ENCODE measurements at regions of chr11 and their contacts with region 1.

Region 1: DNA sequence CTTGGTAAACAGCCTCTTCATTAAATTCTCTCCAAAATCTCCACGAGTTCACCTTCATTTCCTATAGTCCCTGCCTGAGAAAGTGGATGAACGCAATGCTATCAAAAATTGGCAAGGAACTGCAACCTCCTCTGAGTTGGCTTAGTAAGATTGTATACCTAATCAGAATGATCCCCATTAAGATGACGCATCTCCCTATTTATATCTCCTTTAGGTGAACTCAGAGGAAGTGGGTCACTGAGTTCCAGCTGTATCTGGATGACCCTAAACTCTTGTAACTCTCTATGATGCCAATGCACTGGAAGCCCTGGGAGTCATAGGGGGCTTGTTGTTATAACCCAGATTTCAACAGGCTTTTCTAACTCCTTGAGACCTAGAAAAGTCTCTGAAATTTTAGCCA is 48.2 kb downstream of the OR10A6 start:
- DNase-seq: no peak
- ATAC-seq: no peak
- H3K4me3 ChIP-seq: no peak overlapping the region
- H3K27ac ChIP-seq: no peak overlapping the region
- H3K4me1 ChIP-seq: no peaks in the 10 kb centered on the region
- H3K27me3 ChIP-seq: no peaks in the 10 kb centered on the region
- CTCF ChIP-seq: no peak
- EP300 ChIP-seq: no peak
- POLR2A ChIP-seq: no peak
- RAD21 ChIP-seq: no peak

Region 2: DNA sequence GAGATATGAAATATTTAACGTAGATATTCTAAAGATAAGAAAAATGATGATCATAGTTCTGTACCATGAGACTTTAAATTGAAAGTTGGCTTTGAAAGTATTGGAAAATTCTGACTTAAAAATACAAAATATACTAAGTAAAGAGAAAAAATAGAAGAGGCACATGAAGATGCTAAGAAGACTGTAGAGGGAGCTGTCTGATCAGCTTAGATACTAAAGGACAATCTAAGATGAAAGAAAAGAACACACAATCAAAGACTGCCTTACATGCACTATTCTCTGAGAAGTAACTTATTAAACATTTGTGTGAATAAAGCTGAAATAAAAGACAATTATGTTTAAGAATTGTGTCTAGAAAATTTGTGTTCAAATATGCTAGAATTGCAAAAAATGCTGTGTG is 739.0 kb before region 1 on chr11:
- CTCF ChIA-PET with region 1: no interaction called
- POLR2A ChIA-PET with region 1: no interaction called
- in situ Hi-C with region 1: no loop called
- intact Hi-C with region 1: loop called (anchors 5 kb)
- DNase-seq: no peak
- ATAC-seq: no peak
- H3K4me3 ChIP-seq: no peak overlapping the region
- H3K27ac ChIP-seq: no peak overlapping the region
- H3K4me1 ChIP-seq: no peaks in the 10 kb centered on the region
- H3K27me3 ChIP-seq: peaks cover 0 to 3% of the 10 kb centered on the region in 2 experiments; a peak in 1 of 5 replicates
- CTCF ChIP-seq: no peak
- EP300 ChIP-seq: no peak
- POLR2A ChIP-seq: no peak
- RAD21 ChIP-seq: no peak

Region 3: DNA sequence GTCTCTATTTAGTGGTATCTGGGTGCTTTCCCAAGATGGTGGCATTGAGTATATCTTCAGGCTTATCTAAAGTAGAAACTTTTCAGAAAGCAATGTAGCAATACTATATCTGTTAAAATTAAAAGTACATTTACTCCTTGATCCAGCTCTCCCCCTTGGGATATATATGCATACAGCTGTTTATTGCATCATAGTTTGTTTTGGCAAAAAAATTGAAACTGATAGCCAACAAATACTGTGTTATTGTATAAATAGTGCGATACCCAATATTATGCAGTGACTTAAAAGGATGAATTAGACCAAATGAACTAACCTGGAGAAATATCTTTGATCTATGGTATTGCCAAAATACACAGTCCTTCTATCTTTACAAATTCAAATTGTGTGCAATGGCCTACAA is 67.1 kb after region 1 on chr11:
- CTCF ChIA-PET with region 1: no interaction called
- POLR2A ChIA-PET with region 1: no interaction called
- in situ Hi-C with region 1: no loop called
- intact Hi-C with region 1: no loop called
- DNase-seq: no peak
- ATAC-seq: no peak
- H3K4me3 ChIP-seq: no peak overlapping the region
- H3K27ac ChIP-seq: no peak overlapping the region
- H3K4me1 ChIP-seq: no peaks in the 10 kb centered on the region
- H3K27me3 ChIP-seq: no peaks in the 10 kb centered on the region
- CTCF ChIP-seq: no peak
- EP300 ChIP-seq: no peak
- POLR2A ChIP-seq: no peak
- RAD21 ChIP-seq: no peak

Region 4: DNA sequence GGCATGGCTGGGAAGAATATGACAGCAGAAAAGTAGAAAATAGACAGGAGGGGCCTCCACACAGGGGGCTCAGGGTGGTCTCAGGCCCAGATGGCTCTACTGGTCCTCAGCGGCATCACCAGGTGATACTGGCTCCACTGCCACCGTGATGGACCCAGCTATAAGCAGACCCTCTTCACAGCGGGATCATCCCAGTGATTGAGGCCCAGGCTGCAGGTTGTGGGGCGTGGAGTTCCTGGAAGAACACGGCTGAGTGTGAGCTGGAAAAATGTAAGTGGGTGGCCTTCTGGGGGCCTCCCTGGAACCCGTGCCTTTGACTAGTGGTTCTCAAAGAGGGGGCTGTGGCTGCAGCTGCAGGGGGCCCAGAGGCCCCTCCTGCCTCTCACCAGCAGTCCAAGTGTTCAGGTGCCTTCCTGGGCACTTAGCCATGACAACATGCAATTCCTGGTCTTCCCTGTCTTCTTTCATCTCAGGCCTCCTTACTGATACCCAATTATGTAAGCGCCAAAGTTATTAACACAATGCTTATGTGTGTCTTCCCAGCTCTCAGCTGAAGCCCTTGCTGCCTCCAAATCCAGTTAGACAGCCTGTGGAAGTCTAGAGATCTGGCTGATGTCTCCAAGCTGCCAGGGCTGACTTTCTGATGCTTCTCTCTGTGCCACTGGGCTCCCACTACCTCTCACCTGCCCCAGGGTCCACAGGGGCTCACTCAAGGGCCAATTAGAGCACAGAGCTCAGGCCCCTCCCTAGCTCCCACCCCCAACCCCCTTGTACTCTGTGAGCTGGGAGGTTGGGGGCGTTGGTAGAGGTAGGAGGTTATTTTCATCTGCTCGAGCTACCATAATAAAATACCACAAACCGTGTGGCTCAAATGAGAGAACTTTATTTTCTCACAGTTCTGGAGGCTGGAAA is 490.9 kb after region 1 on chr11:
- CTCF ChIA-PET with region 1: no interaction called
- POLR2A ChIA-PET with region 1: no interaction called
- in situ Hi-C with region 1: no loop called
- intact Hi-C with region 1: no loop called
- DNase-seq: no peak
- ATAC-seq: no peak
- H3K4me3 ChIP-seq: no peak overlapping the region
- H3K27ac ChIP-seq: no peak overlapping the region
- H3K4me1 ChIP-seq: no peaks in the 10 kb centered on the region
- H3K27me3 ChIP-seq: no peaks in the 10 kb centered on the region; a peak in 1 of 5 replicates
- CTCF ChIP-seq: no peak
- EP300 ChIP-seq: no peak
- POLR2A ChIP-seq: no peak
- RAD21 ChIP-seq: no peak

Measured in HepG2 (cell line).